Tibial artery (tissue), 4 donors: ENCODE measurements at regions of chr11 and their contacts with region 1.

Region 1: GRCh38 chr11:12389643-12390306 is 12.4 kb downstream of the PARVA start:
- DNase-seq: no peak
- H3K4me3 ChIP-seq: no peak overlapping the region
- H3K27ac ChIP-seq: peak overlapping the region; percentile 54 to 59
- H3K4me1 ChIP-seq: peaks cover 0 to 77% (median 42%) of the 10 kb centered on the region in 4 donors
- H3K27me3 ChIP-seq: no peaks in the 10 kb centered on the region
- CTCF ChIP-seq: no peak

Region 2: DNA sequence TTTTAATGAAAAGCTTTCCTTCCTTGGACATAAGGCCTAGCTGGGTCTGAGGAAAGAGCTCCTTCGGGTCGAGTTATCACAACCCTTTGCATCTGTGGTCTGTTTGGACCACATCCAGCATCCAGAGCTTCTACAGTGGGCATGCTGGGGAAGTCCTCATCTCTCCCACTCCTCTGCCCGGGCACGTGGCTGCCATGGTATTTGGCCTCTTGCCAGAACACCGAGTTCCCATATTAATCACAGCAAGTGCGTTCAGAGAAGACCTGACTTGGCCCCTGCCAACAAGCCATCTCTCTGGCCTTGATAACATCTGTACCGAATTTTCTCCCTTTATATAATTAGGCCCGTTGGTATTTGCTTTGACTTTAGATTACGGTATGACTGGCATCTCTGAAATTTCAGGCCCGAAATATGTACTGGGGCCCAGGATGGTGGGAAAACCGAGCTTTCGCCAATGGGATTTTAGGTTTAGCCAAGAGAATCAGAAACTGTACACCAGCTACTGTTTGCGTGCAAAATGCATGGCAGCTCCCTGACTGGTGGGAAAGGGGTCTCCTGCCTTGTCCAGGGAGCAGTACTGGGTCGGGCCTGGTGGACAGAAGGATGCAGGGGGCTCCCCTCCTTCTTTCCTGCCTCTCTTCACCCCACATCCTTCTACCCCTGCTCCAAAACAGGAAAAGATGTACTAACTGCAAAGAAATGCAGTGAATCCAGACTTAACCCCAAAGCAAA is 189.3 kb before region 1 on chr11:
- intact Hi-C with region 1: no loop called
- DNase-seq: peak; percentile 69 to 89
- H3K4me3 ChIP-seq: no peak overlapping the region
- H3K27ac ChIP-seq: peak overlapping the region; percentile 71 to 72
- H3K4me1 ChIP-seq: peaks cover 0 to 71% (median 57%) of the 10 kb centered on the region in 4 donors
- H3K27me3 ChIP-seq: no peaks in the 10 kb centered on the region
- CTCF ChIP-seq: no peak

Region 3: GRCh38 chr11:12485328-12485727 is 95.6 kb after region 1 on chr11:
- intact Hi-C with region 1: loop called (anchors 10 kb)
- DNase-seq: no peak
- H3K4me3 ChIP-seq: no peak overlapping the region
- H3K27ac ChIP-seq: no peak overlapping the region
- H3K4me1 ChIP-seq: peaks cover 0 to 22% (median 7%) of the 10 kb centered on the region in 4 donors
- H3K27me3 ChIP-seq: no peaks in the 10 kb centered on the region
- CTCF ChIP-seq: peak; percentile 28 to 32

Region 4: GRCh38 chr11:12556788-12557384 is 167.1 kb after region 1 on chr11:
- intact Hi-C with region 1: loop called (anchors 10 kb)
- DNase-seq: peak; percentile 72 to 84
- H3K4me3 ChIP-seq: no peak overlapping the region
- H3K27ac ChIP-seq: peak overlapping the region in 1 of 2 donors; percentile 59
- H3K4me1 ChIP-seq: peaks cover 0 to 60% (median 27%) of the 10 kb centered on the region in 4 donors
- H3K27me3 ChIP-seq: no peaks in the 10 kb centered on the region
- CTCF ChIP-seq: no peak